Posterior vena cava (tissue), 2 donors: ENCODE measurements at regions of chr12 and their contacts with region 1.

Region 1: GRCh38 chr12:59904874-59905521 is 309.2 kb downstream of the SLC16A7 start:
- DNase-seq: no peak

Region 2: GRCh38 chr12:58479401-58479800 is 1425.6 kb before region 1 on chr12:
- intact Hi-C with region 1: loop called in 1 of 2 experiments (anchors 10 kb)
- DNase-seq: no peak

Region 3: DNA sequence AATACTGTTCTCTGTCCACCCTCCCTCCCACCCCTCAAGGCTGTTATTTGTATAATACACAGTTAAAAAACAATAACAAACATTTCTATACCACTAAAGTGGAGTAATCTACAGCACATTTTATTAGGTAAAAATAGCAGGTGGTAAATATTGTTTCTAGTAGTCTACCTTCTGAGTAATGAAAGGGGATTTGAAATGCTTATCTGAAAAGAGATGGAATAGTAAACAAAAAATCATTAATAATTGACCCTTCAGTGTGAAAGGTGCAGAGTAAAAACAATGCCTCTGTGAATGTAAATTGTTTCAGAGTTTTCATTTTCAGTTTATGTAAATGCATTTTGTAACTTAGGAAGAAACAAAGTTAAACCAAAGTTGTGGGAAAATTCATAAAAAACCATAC is 12.0 kb after region 1 on chr12:
- intact Hi-C with region 1: no loop called
- DNase-seq: no peak